K562 (cell line): ENCODE measurements at regions of chr1 and their contacts with region 1.

Region 1: GRCh38 chr1:190518495-190518894 is 40.8 kb upstream of the BRINP3 start:
- DNase-seq: no peak
- ATAC-seq: no peak
- H3K4me3 ChIP-seq: no peak overlapping the region
- H3K27ac ChIP-seq: no peak overlapping the region
- H3K4me1 ChIP-seq: no peaks in the 10 kb centered on the region
- H3K27me3 ChIP-seq: no peaks in the 10 kb centered on the region
- CTCF ChIP-seq: no peak
- EP300 ChIP-seq: no peak
- POLR2A ChIP-seq: no peak
- RAD21 ChIP-seq: no peak

Region 2: DNA sequence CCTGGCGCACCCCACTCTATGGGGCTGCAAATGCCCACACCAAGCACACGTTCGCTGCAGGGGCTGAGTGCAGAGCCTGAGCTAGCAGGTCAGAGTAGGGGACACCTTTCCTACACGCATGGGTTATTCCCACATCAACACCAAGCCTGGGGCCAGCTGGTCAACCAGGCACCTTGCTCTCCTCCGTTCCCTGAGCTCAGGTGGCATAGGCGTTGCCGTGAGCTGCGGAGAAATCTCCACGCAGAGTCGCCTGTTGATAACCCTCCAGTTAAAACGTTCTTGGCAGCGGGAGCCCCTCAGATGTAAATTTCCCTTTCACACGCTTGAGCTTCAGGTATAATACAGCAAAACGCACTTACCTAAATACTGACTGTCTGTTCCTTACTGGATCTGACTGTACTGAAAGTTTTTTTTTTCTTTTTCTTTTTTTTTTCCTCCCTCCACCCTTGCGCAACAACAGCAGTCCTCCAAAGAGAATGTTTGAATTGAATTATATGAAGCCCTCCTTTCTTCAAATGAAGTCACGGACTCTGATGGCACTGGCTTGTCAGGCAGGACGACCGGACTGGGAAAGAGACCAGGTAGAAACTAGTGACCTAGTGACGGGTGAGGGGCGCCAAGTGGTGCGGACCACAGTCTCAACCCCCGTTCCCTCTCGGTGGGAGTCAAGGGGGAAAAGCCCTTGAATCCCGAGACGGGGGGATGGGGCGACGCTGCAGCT is 42.9 kb before region 1 on chr1:
- CTCF ChIA-PET with region 1: no interaction called
- POLR2A ChIA-PET with region 1: no interaction called
- in situ Hi-C with region 1: no loop called
- intact Hi-C with region 1: no loop called
- DNase-seq: no peak
- ATAC-seq: peak; percentile 25; the same call in 1 of the 3 replicates
- H3K4me3 ChIP-seq: no peak overlapping the region
- H3K27ac ChIP-seq: no peak overlapping the region
- H3K4me1 ChIP-seq: no peaks in the 10 kb centered on the region
- H3K27me3 ChIP-seq: no peaks in the 10 kb centered on the region
- CTCF ChIP-seq: no peak
- EP300 ChIP-seq: no peak
- POLR2A ChIP-seq: no peak
- RAD21 ChIP-seq: no peak

Region 3: DNA sequence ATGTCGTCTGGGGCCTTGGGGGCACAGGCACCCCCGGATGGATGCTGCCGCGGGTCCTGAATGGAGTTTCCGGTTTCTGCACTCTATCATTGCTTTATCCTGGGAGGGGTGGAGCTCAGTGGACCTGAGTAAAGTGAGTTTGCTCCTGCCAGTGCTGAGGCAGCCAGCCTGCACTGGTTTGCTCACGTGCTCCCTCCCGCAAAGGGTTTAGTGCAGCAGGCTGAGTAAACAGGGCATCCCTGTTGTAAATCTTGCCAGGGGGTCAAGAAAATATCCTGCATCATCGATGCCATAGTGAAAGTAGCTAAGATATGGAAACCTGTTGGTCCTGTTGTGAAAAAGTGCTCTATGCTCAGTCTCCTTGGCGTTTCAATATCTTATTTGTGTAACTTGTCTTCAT is 44.7 kb after region 1 on chr1:
- CTCF ChIA-PET with region 1: no interaction called
- POLR2A ChIA-PET with region 1: no interaction called
- in situ Hi-C with region 1: no loop called
- intact Hi-C with region 1: no loop called
- DNase-seq: no peak
- ATAC-seq: no peak
- H3K4me3 ChIP-seq: no peak overlapping the region
- H3K27ac ChIP-seq: no peak overlapping the region
- H3K4me1 ChIP-seq: no peaks in the 10 kb centered on the region
- H3K27me3 ChIP-seq: no peaks in the 10 kb centered on the region
- CTCF ChIP-seq: no peak
- EP300 ChIP-seq: no peak
- POLR2A ChIP-seq: no peak
- RAD21 ChIP-seq: no peak

Region 4: DNA sequence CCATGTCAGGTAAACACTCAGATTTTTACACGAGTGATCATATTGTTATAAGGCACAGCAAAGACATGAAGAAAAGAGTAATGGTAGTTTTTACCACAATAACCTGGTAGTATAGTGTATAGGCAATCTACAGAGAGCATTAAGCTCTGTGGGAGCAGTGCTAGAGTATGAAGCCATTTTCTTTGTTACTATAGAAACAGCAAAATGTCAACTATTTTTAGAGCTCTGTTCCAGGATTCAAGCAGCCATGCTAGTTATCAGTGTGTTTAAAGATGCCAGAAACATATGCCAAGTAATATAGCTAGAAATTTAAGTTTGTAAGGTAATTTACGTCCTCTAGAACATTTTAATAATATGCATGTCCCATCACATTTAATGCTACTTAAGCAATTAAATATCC is 1562.2 kb after region 1 on chr1:
- CTCF ChIA-PET with region 1: no interaction called
- POLR2A ChIA-PET with region 1: no interaction called
- in situ Hi-C with region 1: loop called (anchors 10 kb)
- intact Hi-C with region 1: no loop called
- DNase-seq: no peak
- ATAC-seq: peak; percentile 48
- H3K4me3 ChIP-seq: no peak overlapping the region
- H3K27ac ChIP-seq: no peak overlapping the region
- H3K4me1 ChIP-seq: no peaks in the 10 kb centered on the region
- H3K27me3 ChIP-seq: no peaks in the 10 kb centered on the region
- CTCF ChIP-seq: no peak
- EP300 ChIP-seq: no peak
- POLR2A ChIP-seq: no peak
- RAD21 ChIP-seq: no peak